Naive thymus-derived CD4-positive, alpha-beta T cell (primary cell): ENCODE measurements at regions of chr10 and their contacts with region 1.

Region 1: DNA sequence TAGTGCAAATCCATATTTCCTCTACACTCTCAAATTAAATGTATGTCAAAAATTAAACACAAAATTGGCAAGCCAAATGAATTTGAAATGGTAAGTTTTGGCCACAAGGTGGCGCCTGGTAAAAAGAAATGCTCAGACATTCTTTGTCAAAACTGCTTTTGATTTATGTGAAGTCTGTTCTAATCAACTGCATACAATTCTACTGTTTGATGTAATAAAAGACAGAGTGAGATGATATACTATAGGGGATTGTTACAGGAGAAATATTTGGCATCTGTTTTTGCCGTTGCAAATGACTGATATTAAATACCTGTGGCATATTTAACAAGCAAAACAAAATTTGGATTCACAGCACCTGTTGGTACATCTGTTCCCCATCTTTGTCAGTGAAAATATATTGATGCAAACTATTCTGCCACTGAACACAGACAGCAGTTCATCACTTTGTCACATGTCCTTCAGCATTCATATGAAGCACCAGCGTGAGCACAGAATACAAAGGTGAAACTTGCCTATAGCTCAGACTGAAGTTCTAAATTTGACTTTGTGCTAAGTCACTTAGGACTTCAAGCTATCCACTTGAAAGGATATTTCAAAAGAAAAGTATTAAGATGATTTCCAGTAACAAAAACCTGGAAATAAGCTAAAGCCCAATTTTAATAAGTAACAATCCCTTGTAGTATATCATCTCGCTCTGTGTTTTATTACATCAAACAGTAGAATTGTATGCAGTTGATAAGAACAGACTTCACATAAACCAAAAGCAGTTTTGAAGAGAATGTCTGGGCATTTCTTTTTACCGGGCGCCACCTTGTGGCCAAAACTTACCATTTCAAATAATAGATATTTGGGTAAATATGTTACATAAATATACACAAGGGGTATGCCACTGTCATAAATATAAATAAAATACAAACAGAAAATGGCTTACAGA is 10.2 kb upstream of the CH25H start:
- DNase-seq: peak; percentile 17 to 66 (median 56)
- ATAC-seq: peak; percentile 75
- H3K4me3 ChIP-seq: no peak overlapping the region
- H3K4me3 Mint-ChIP-seq: peak overlapping the region in 5 of 10 donors; percentile 0 to 69 (median 3)
- H3K27ac ChIP-seq: no peak overlapping the region
- H3K27ac Mint-ChIP-seq: peak overlapping the region in 7 of 9 donors; percentile 2 to 79 (median 25)
- H3K4me1 ChIP-seq: peaks cover 0 to 6% of the 10 kb centered on the region in 2 donors
- H3K4me1 Mint-ChIP-seq: peaks cover 8 to 15% (median 10%) of the 10 kb centered on the region in 7 donors
- H3K27me3 ChIP-seq: no peaks in the 10 kb centered on the region
- H3K27me3 Mint-ChIP-seq: peaks cover 0 to 3% (median 0%) of the 10 kb centered on the region in 5 donors

Region 2: GRCh38 chr10:88565072-88565471 is 652.3 kb before region 1 on chr10:
- CTCF ChIA-PET with region 1: interaction called, 3 read pairs
- POLR2A ChIA-PET with region 1: no interaction called
- intact Hi-C with region 1: loop called in 1 of 2 experiments (anchors 1 kb)
- DNase-seq: peak in 4 of 9 donors; percentile 5 to 29 (median 12)
- ATAC-seq: peak; percentile 54
- H3K4me3 ChIP-seq: no peak overlapping the region
- H3K4me3 Mint-ChIP-seq: no peak overlapping the region
- H3K27ac ChIP-seq: no peak overlapping the region
- H3K27ac Mint-ChIP-seq: no peak overlapping the region
- H3K4me1 ChIP-seq: no peaks in the 10 kb centered on the region
- H3K4me1 Mint-ChIP-seq: peaks cover 0 to 4% (median under 1%) of the 10 kb centered on the region in 7 donors
- H3K27me3 ChIP-seq: no peaks in the 10 kb centered on the region
- H3K27me3 Mint-ChIP-seq: peaks cover 0 to 23% (median 0%) of the 10 kb centered on the region in 5 donors

Region 3: GRCh38 chr10:88835096-88835909 is 382.0 kb before region 1 on chr10:
- CTCF ChIA-PET with region 1: interaction called, 18 read pairs
- POLR2A ChIA-PET with region 1: no interaction called
- intact Hi-C with region 1: loop called (anchors 1 to 5 kb)
- DNase-seq: peak; percentile 65 to 86 (median 82)
- ATAC-seq: peak; percentile 95
- H3K4me3 ChIP-seq: no peak overlapping the region
- H3K4me3 Mint-ChIP-seq: no peak overlapping the region
- H3K27ac ChIP-seq: no peak overlapping the region
- H3K27ac Mint-ChIP-seq: no peak overlapping the region
- H3K4me1 ChIP-seq: peaks cover 14 to 46% of the 10 kb centered on the region in 2 donors
- H3K4me1 Mint-ChIP-seq: peaks cover 10 to 33% (median 32%) of the 10 kb centered on the region in 7 donors
- H3K27me3 ChIP-seq: no peaks in the 10 kb centered on the region
- H3K27me3 Mint-ChIP-seq: no peaks in the 10 kb centered on the region

Region 4: GRCh38 chr10:89147256-89147655 is 70.1 kb before region 1 on chr10:
- CTCF ChIA-PET with region 1: no interaction called
- POLR2A ChIA-PET with region 1: no interaction called
- intact Hi-C with region 1: no loop called
- DNase-seq: no peak
- ATAC-seq: no peak
- H3K4me3 ChIP-seq: no peak overlapping the region
- H3K4me3 Mint-ChIP-seq: no peak overlapping the region
- H3K27ac ChIP-seq: no peak overlapping the region
- H3K27ac Mint-ChIP-seq: no peak overlapping the region
- H3K4me1 ChIP-seq: no peaks in the 10 kb centered on the region
- H3K4me1 Mint-ChIP-seq: peaks cover 0 to 18% (median 0%) of the 10 kb centered on the region in 7 donors
- H3K27me3 ChIP-seq: no peaks in the 10 kb centered on the region
- H3K27me3 Mint-ChIP-seq: peaks cover 0 to 32% (median 0%) of the 10 kb centered on the region in 5 donors

Region 5: GRCh38 chr10:89171263-89171872 is 46.0 kb before region 1 on chr10:
- CTCF ChIA-PET with region 1: no interaction called
- POLR2A ChIA-PET with region 1: no interaction called
- intact Hi-C with region 1: no loop called
- DNase-seq: no peak
- ATAC-seq: no peak
- H3K4me3 ChIP-seq: no peak overlapping the region
- H3K4me3 Mint-ChIP-seq: no peak overlapping the region
- H3K27ac ChIP-seq: no peak overlapping the region
- H3K27ac Mint-ChIP-seq: no peak overlapping the region
- H3K4me1 ChIP-seq: no peaks in the 10 kb centered on the region
- H3K4me1 Mint-ChIP-seq: peaks cover 0 to 2% (median 0%) of the 10 kb centered on the region in 7 donors
- H3K27me3 ChIP-seq: no peaks in the 10 kb centered on the region
- H3K27me3 Mint-ChIP-seq: peaks cover 14 to 68% (median 19%) of the 10 kb centered on the region in 5 donors

Region 6: GRCh38 chr10:89207181-89207800 is 10.0 kb before region 1 on chr10 and contains the start of gene CH25H:
- CTCF ChIA-PET with region 1: interaction called, 10 read pairs
- POLR2A ChIA-PET with region 1: interaction called, 3 read pairs
- intact Hi-C with region 1: no loop called
- DNase-seq: peak; percentile 7 to 54 (median 32)
- ATAC-seq: peak; percentile 52
- H3K4me3 ChIP-seq: peak within 1 kb of the TSS; percentile 61
- H3K4me3 Mint-ChIP-seq: peak within 1 kb of the TSS; percentile 82 to 92 (median 89)
- H3K27ac ChIP-seq: no peak within 1 kb of the TSS
- H3K27ac Mint-ChIP-seq: peak within 1 kb of the TSS in 7 of 9 donors; percentile 27 to 94 (median 73)
- H3K4me1 ChIP-seq: peaks cover 0 to 6% of the 10 kb centered on the region in 2 donors
- H3K4me1 Mint-ChIP-seq: peaks cover 7 to 20% (median 12%) of the 10 kb centered on the region in 7 donors
- H3K27me3 ChIP-seq: peaks cover 0 to 5% of the 10 kb centered on the region in 2 donors
- H3K27me3 Mint-ChIP-seq: peaks cover 30 to 51% (median 41%) of the 10 kb centered on the region in 5 donors
- total RNA-seq, gene CH25H: 0.34 TPM in 1 of 5 experiments, not detected in the others

Region 7: GRCh38 chr10:89251409-89252224 is 34.3 kb after region 1 on chr10 and contains the start of gene LIPA:
- CTCF ChIA-PET with region 1: interaction called, 6 read pairs
- POLR2A ChIA-PET with region 1: interaction called, 3 read pairs
- intact Hi-C with region 1: loop called in 1 of 2 experiments (anchors 1 kb)
- DNase-seq: peak; percentile 78 to 97 (median 94)
- ATAC-seq: peak; percentile 97
- H3K4me3 ChIP-seq: peak within 1 kb of the TSS; percentile 80
- H3K4me3 Mint-ChIP-seq: peak within 1 kb of the TSS; percentile 82 to 91 (median 90)
- H3K27ac ChIP-seq: peak within 1 kb of the TSS; percentile 76
- H3K27ac Mint-ChIP-seq: peak within 1 kb of the TSS; percentile 38 to 90 (median 84)
- H3K4me1 ChIP-seq: peaks cover 8 to 9% of the 10 kb centered on the region in 2 donors
- H3K4me1 Mint-ChIP-seq: peaks cover 17 to 32% (median 22%) of the 10 kb centered on the region in 7 donors
- H3K27me3 ChIP-seq: no peaks in the 10 kb centered on the region
- H3K27me3 Mint-ChIP-seq: peaks cover 0 to 9% (median 0%) of the 10 kb centered on the region in 5 donors
- total RNA-seq, gene LIPA: 19.9 to 49.9 (median 48.3) TPM

Region 8: DNA sequence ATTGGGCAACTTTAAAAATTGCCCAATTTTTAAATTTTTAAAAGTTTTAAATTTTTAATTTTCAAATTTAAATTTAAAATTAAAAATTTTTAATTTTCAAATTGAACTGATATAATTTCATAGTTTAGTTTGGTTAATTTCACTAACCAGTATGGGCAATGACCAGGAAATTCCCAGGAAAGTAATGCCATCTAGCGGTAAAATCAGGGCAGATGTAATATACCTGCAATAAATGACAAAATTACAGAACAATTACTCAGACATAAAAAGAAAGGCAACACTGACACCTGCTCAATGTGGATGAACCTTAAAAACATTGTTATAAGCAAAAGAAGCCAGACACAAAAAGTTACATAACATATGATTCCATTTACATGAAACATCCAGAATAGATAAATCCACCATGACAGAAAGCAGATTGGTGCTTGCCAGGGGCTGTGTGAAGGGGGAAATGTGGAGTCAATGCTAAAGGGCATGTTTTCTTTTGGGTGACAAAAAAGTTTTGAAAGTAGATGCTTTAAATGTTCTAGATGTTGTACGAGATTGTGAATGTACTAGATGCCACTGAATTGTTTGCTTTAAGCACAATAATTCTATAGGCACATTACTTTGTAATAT is 346.6 kb after region 1 on chr10:
- CTCF ChIA-PET with region 1: interaction called, 5 read pairs
- POLR2A ChIA-PET with region 1: no interaction called
- intact Hi-C with region 1: loop called (anchors 1 kb)
- DNase-seq: peak in 7 of 9 donors; percentile 13 to 58 (median 48)
- ATAC-seq: peak; percentile 65
- H3K4me3 ChIP-seq: no peak overlapping the region
- H3K4me3 Mint-ChIP-seq: no peak overlapping the region
- H3K27ac ChIP-seq: no peak overlapping the region
- H3K27ac Mint-ChIP-seq: no peak overlapping the region
- H3K4me1 ChIP-seq: no peaks in the 10 kb centered on the region
- H3K4me1 Mint-ChIP-seq: no peaks in the 10 kb centered on the region
- H3K27me3 ChIP-seq: no peaks in the 10 kb centered on the region
- H3K27me3 Mint-ChIP-seq: peaks cover 4 to 44% (median 14%) of the 10 kb centered on the region in 5 donors